Panc1 (cell line): ENCODE measurements at regions of chr2 and their contacts with region 1.

Region 1: DNA sequence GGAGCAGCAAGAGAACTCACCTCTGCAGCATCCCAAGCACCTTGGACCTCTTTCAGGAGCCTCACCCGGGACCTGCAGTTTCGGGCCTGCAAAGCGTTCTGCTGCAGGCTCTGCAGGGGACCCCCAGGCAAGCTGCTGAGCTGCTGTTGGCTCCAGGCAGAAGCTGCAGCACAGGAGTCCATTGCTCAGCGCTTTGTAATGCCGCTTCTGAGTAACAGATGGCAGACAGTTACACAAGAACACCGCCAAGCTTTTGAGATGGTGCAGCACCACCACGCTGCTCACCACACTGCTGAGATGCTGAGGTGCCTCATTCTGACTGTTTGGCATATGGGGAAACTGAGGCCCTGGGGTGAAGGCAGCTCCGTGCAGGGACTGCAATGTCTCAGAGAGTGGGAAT is 1.9 kb upstream of the GALNT14 start:
- DNase-seq: no peak
- ATAC-seq: no peak
- H3K4me3 ChIP-seq: no peak overlapping the region
- H3K27ac ChIP-seq: no peak overlapping the region
- H3K4me1 ChIP-seq: no peaks in the 10 kb centered on the region; the same call in 1 of the 2 replicates
- H3K27me3 ChIP-seq: peaks cover 36% of the 10 kb centered on the region
- CTCF ChIP-seq: no peak

Region 2: DNA sequence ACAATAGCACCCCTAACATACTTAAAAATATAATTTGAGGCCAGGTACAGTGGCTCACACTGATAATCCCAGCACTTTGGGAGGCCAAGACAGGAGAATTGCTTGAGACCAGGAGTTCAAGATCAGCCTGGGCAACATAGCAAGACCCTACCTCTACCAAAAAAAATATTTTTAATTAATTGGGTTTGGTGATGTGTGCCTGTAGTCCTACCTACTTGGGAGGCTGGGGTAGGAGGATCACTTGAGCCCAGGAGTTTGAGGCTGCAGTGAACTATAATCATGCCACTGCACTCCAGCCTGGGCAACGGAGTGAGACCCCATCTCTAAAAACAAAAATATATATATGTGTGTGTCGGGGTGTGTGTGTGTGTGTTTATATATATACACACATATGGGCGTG is 779.3 kb after region 1 on chr2:
- CTCF ChIA-PET with region 1: no interaction called
- POLR2A ChIA-PET with region 1: interaction called, 19 read pairs
- in situ Hi-C with region 1: no loop called
- intact Hi-C with region 1: no loop called
- DNase-seq: no peak
- ATAC-seq: no peak
- H3K4me3 ChIP-seq: no peak overlapping the region
- H3K27ac ChIP-seq: no peak overlapping the region
- H3K4me1 ChIP-seq: no peaks in the 10 kb centered on the region
- H3K27me3 ChIP-seq: no peaks in the 10 kb centered on the region
- CTCF ChIP-seq: no peak